GM23248 (cell line): ENCODE measurements at regions of chr12 and their contacts with region 1.

Region 1: GRCh38 chr12:109432841-109433304 is 44.2 kb downstream of the KCTD10 start:
- DNase-seq: peak; percentile 65
- H3K4me3 ChIP-seq: no peak overlapping the region
- H3K27ac ChIP-seq: no peak overlapping the region
- H3K4me1 ChIP-seq: peaks cover 9% of the 10 kb centered on the region
- H3K27me3 ChIP-seq: no peaks in the 10 kb centered on the region

Region 2: GRCh38 chr12:109477185-109477962 is 44.5 kb after region 1 on chr12 and contains the starts of genes KCTD10 and UBE3B:
- in situ Hi-C with region 1: loop called (anchors 5 kb)
- DNase-seq: peak; percentile 96
- H3K4me3 ChIP-seq: peak within 1 kb of the TSS; percentile 95
- H3K27ac ChIP-seq: peak within 1 kb of the TSS; percentile 93
- H3K4me1 ChIP-seq: peaks cover 29% of the 10 kb centered on the region
- H3K27me3 ChIP-seq: no peaks in the 10 kb centered on the region
- total RNA-seq, gene KCTD10: 97.0 and 117 TPM in 2 replicates
- total RNA-seq, gene UBE3B: 32.0 and 34.7 TPM in 2 replicates